Transverse colon (tissue), 4 donors: ENCODE measurements at regions of chr2 and their contacts with region 1.

Region 1: GRCh38 chr2:127379712-127380355 is 7.9 kb downstream of the MAP3K2 start:
- DNase-seq: no peak
- H3K4me3 ChIP-seq: no peak overlapping the region
- H3K27ac ChIP-seq: no peak overlapping the region
- H3K4me1 ChIP-seq: peaks cover 0 to 44% (median 4%) of the 10 kb centered on the region in 4 donors
- H3K27me3 ChIP-seq: no peaks in the 10 kb centered on the region
- CTCF ChIP-seq: no peak
- EP300 ChIP-seq: no peak
- POLR2A ChIP-seq: no peak

Region 2: GRCh38 chr2:127226520-127227263 is 153.1 kb before region 1 on chr2:
- in situ Hi-C with region 1: no loop called
- intact Hi-C with region 1: no loop called
- DNase-seq: peak; percentile 86
- H3K4me3 ChIP-seq: peak overlapping the region in 1 of 4 donors; percentile 4
- H3K27ac ChIP-seq: peak overlapping the region; percentile 8 to 49 (median 22)
- H3K4me1 ChIP-seq: peaks cover 4 to 15% (median 10%) of the 10 kb centered on the region in 4 donors
- H3K27me3 ChIP-seq: peaks cover 35% of the 10 kb centered on the region
- CTCF ChIP-seq: no peak
- EP300 ChIP-seq: no peak
- POLR2A ChIP-seq: no peak

Region 3: GRCh38 chr2:127407661-127408003 is 27.8 kb after region 1 on chr2:
- in situ Hi-C with region 1: no loop called
- intact Hi-C with region 1: loop called (anchors 2 kb)
- DNase-seq: no peak
- H3K4me3 ChIP-seq: peak overlapping the region in 3 of 4 donors; percentile 38 to 63 (median 52)
- H3K27ac ChIP-seq: peak overlapping the region; percentile 85 to 90 (median 86)
- H3K4me1 ChIP-seq: peaks cover 9 to 50% (median 26%) of the 10 kb centered on the region in 4 donors
- H3K27me3 ChIP-seq: no peaks in the 10 kb centered on the region
- CTCF ChIP-seq: no peak
- EP300 ChIP-seq: no peak
- POLR2A ChIP-seq: no peak

Region 4: DNA sequence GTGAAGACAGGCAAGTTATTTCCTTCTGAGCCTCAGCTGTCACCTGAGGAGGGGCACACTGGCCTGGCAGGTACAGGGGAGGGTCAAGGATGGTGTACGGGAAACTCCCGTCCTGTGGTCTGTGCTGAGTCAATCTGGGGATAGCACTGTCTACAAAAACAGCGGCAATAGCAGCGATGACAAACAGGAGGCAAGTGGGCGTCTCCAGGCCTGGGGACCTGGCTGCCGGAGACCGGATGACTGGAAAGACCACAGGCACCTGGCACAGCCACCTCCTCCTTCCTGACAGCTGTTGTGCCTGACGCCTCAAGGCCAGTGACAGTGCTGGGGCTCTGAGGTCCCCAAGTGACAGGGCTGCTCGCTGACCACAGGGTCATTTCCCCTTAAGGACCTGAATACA is 1141.0 kb after region 1 on chr2:
- in situ Hi-C with region 1: no loop called
- intact Hi-C with region 1: no loop called
- DNase-seq: no peak
- H3K4me3 ChIP-seq: no peak overlapping the region
- H3K27ac ChIP-seq: no peak overlapping the region
- H3K4me1 ChIP-seq: no peaks in the 10 kb centered on the region
- H3K27me3 ChIP-seq: no peaks in the 10 kb centered on the region
- CTCF ChIP-seq: no peak
- EP300 ChIP-seq: no peak
- POLR2A ChIP-seq: no peak